ENCODE measurements at regions of chr6 and their contacts with region 1.

Region 1: GRCh38 chr6:39302669-39303424 is 11.4 kb downstream of the KCNK17 start:
- DNase-seq: peak; percentile 96
- H3K4me3 Mint-ChIP-seq: no peak overlapping the region
- H3K27ac Mint-ChIP-seq: no peak overlapping the region
- H3K4me1 Mint-ChIP-seq: peaks cover 9% of the 10 kb centered on the region
- H3K27me3 Mint-ChIP-seq: peaks cover 42% of the 10 kb centered on the region
- CTCF ChIP-seq: peak; percentile 96

Region 2: DNA sequence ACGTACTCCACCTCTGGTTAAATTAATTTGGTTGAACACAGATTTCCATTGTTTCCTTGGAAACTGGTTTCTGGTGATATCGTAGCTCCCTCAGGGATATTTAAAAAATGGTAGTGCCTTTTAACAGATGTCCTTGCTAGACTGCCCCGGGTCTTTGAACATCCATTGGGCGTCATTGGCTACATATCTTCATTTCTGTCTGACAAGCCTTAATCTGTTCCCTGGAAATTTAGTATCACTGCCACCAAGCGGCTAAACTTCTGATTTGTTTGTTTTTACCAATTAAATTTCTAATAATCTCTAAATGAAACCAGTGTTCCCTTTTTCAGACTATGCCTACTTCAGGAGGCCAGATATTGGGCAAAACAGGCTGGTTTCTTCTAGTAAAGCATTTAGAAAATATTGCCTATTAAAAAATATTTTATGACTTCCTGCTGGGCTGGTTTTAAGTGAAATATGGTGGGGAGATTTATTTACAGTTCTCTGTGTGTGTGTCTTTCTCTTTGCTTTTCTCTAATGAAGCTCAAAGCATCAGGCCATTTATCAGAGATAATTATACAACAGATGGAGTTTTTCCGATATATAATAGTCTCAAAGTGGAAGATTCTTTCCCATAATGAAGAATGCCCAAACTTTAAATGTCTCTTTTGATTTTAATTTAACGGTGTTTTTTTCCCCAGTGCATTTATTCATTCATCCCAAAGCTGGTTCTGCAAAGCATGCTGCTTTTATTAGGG is 1233.8 kb before region 1 on chr6:
- CTCF ChIA-PET with region 1: no interaction called
- intact Hi-C with region 1: no loop called
- DNase-seq: no peak
- H3K4me3 Mint-ChIP-seq: no peak overlapping the region
- H3K27ac Mint-ChIP-seq: no peak overlapping the region
- H3K4me1 Mint-ChIP-seq: no peaks in the 10 kb centered on the region
- H3K27me3 Mint-ChIP-seq: no peaks in the 10 kb centered on the region
- CTCF ChIP-seq: no peak

Region 3: GRCh38 chr6:38852215-38852614 is 450.6 kb before region 1 on chr6:
- CTCF ChIA-PET with region 1: no interaction called
- intact Hi-C with region 1: no loop called
- DNase-seq: no peak
- H3K4me3 Mint-ChIP-seq: no peak overlapping the region
- H3K27ac Mint-ChIP-seq: no peak overlapping the region
- H3K4me1 Mint-ChIP-seq: no peaks in the 10 kb centered on the region
- H3K27me3 Mint-ChIP-seq: peaks cover 30% of the 10 kb centered on the region
- CTCF ChIP-seq: no peak

Region 4: GRCh38 chr6:38997128-38997761 is 305.6 kb before region 1 on chr6:
- CTCF ChIA-PET with region 1: interaction called, 10 read pairs
- intact Hi-C with region 1: no loop called
- DNase-seq: peak; percentile 68
- H3K4me3 Mint-ChIP-seq: no peak overlapping the region
- H3K27ac Mint-ChIP-seq: no peak overlapping the region
- H3K4me1 Mint-ChIP-seq: no peaks in the 10 kb centered on the region
- H3K27me3 Mint-ChIP-seq: peaks cover 29% of the 10 kb centered on the region
- CTCF ChIP-seq: peak; percentile 68

Region 5: GRCh38 chr6:39166189-39166911 is 136.5 kb before region 1 on chr6:
- CTCF ChIA-PET with region 1: interaction called, 31 read pairs
- intact Hi-C with region 1: loop called (anchors 1 kb)
- DNase-seq: peak; percentile 96
- H3K4me3 Mint-ChIP-seq: no peak overlapping the region
- H3K27ac Mint-ChIP-seq: no peak overlapping the region
- H3K4me1 Mint-ChIP-seq: peaks cover 32% of the 10 kb centered on the region
- H3K27me3 Mint-ChIP-seq: no peaks in the 10 kb centered on the region
- CTCF ChIP-seq: peak; percentile 99

Region 6: GRCh38 chr6:39189915-39190544 is 112.8 kb before region 1 on chr6:
- CTCF ChIA-PET with region 1: interaction called, 14 read pairs
- intact Hi-C with region 1: no loop called
- DNase-seq: peak; percentile 67
- H3K4me3 Mint-ChIP-seq: no peak overlapping the region
- H3K27ac Mint-ChIP-seq: no peak overlapping the region
- H3K4me1 Mint-ChIP-seq: peaks cover 56% of the 10 kb centered on the region
- H3K27me3 Mint-ChIP-seq: no peaks in the 10 kb centered on the region
- CTCF ChIP-seq: peak; percentile 70

Region 7: GRCh38 chr6:39196673-39197091 is 106.2 kb before region 1 on chr6:
- CTCF ChIA-PET with region 1: interaction called, 15 read pairs
- intact Hi-C with region 1: no loop called
- DNase-seq: no peak
- H3K4me3 Mint-ChIP-seq: peak overlapping the region; percentile 15
- H3K27ac Mint-ChIP-seq: peak overlapping the region; percentile 63
- H3K4me1 Mint-ChIP-seq: peaks cover 62% of the 10 kb centered on the region
- H3K27me3 Mint-ChIP-seq: no peaks in the 10 kb centered on the region
- CTCF ChIP-seq: no peak

Region 8: DNA sequence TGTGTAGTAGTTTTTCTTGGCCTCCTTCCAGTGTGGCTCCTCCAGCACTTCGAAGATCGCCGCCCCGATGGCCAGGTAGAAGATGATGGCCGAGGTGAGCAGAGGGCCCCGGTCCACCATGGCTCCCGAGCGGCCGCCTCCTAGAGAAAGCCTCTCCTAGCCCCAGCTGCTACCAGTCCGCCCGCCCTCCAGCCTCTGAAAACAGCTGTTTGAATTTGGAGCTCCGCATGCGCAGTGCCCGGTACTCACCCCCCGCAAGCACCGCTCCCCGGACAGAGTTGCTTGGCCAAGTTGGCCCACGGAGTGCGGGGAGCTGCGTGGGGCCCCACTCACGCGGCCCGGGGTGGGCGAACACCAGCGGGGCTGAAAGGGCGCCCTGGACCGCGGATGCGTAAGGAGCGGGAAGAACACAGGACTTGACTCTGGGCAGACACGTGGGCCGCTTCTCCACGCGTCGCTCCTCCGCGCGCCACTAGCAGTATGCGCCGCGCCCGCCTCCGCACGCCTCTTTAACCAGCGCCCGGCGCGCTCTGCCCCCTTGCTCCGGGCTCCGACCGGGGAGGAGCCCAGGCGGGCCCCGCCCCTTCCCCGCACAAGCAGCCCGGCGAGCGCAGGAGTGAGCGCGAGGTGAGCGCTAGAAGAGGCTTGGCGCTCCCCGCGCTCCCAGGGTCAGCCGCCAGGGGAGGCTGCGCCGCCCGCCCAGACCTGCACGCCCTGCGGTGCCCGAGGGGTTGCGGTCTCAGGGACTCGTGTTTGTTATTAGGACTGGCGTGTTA is 73.7 kb before region 1 on chr6 and contains the start of gene KCNK5:
- CTCF ChIA-PET with region 1: interaction called, 6 read pairs
- intact Hi-C with region 1: loop called (anchors 1 kb)
- DNase-seq: peak; percentile 96
- H3K4me3 Mint-ChIP-seq: peak within 1 kb of the TSS; percentile 69
- H3K27ac Mint-ChIP-seq: peak within 1 kb of the TSS; percentile 61
- H3K4me1 Mint-ChIP-seq: peaks cover 43% of the 10 kb centered on the region
- H3K27me3 Mint-ChIP-seq: no peaks in the 10 kb centered on the region
- CTCF ChIP-seq: peak; percentile 88
- total RNA-seq, gene KCNK5: 62.4 and 77.5 TPM in 2 replicates

Region 9: DNA sequence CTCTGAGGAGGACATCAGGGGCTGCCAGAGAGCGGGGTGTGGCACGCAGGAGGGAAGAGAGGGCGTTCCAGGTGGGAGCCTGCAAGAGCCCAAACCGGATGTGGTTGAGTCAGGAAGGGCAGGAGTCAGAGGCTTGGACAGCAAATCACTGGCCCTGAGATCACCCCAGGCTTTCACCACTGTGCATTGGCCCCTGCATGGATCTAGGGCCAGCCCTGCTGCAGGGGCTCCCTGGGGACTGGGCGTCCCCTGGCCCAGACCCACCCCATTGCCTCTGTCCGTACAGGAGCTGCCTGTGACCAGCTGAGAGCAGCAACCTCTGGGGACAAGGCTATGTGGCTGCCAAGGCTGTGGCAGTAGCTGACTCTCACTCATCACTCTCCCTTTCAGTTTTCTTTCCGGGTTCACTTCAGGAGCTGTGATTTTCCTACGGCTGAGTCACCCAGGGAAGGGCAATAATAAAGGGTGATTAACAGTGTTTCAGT is 22.6 kb before region 1 on chr6:
- CTCF ChIA-PET with region 1: interaction called, 11 read pairs
- intact Hi-C with region 1: no loop called
- DNase-seq: peak; percentile 86
- H3K4me3 Mint-ChIP-seq: peak overlapping the region; percentile 38
- H3K27ac Mint-ChIP-seq: peak overlapping the region; percentile 91
- H3K4me1 Mint-ChIP-seq: peaks cover 36% of the 10 kb centered on the region
- H3K27me3 Mint-ChIP-seq: no peaks in the 10 kb centered on the region
- CTCF ChIP-seq: no peak

Region 10: GRCh38 chr6:39938773-39939654 is 636.2 kb after region 1 on chr6:
- CTCF ChIA-PET with region 1: no interaction called
- intact Hi-C with region 1: no loop called
- DNase-seq: no peak
- H3K4me3 Mint-ChIP-seq: no peak overlapping the region
- H3K27ac Mint-ChIP-seq: no peak overlapping the region
- H3K4me1 Mint-ChIP-seq: no peaks in the 10 kb centered on the region
- H3K27me3 Mint-ChIP-seq: peaks cover 36% of the 10 kb centered on the region
- CTCF ChIP-seq: no peak